ENCODE measurements at regions of chr7 and their contacts with region 1.

Region 1: GRCh38 chr7:102236592-102237287 is 49.9 kb upstream of the SH2B2 start:
- ATAC-seq: peak; percentile 92 to 98 (median 95)
- H3K4me3 ChIP-seq: no peak overlapping the region
- H3K27ac ChIP-seq: no peak overlapping the region
- H3K4me1 ChIP-seq: no peaks in the 10 kb centered on the region

Region 2: DNA sequence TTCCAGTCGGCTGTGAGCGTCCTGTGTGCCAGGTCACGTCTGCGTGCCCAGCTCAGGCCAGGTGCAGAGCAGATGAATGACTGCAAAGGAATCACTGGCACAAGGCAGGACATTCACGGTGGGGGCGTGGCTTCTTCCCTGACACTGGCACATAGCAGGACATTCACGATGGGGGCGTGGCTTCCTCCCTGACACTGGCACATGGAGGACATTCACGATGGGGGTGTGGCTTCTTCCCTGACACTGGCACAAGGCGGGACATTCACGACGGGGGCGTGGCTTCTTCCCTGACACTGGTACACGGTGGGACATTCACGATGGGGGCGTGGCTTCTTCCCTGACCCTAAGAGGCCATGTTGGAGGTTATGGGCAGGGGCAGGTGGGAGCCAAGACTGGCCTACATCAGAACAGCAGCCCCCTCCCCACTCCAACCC is 671.9 kb before region 1 on chr7:
- in situ Hi-C with region 1: loop called in 1 of 9 experiments (anchors 25 kb)
- ATAC-seq: peak in 6 of 8 experiments; percentile 50 to 82 (median 74)
- H3K4me3 ChIP-seq: no peak overlapping the region
- H3K27ac ChIP-seq: no peak overlapping the region
- H3K4me1 ChIP-seq: no peaks in the 10 kb centered on the region

Region 3: GRCh38 chr7:101688183-101688831 is 548.4 kb before region 1 on chr7:
- in situ Hi-C with region 1: loop called in 7 of 9 experiments (anchors 10 to 25 kb)
- ATAC-seq: peak; percentile 94 to 99 (median 96)
- H3K4me3 ChIP-seq: peak overlapping the region in 3 of 5 donors; percentile 9 to 20 (median 19)
- H3K27ac ChIP-seq: no peak overlapping the region
- H3K4me1 ChIP-seq: peaks cover 3 to 11% of the 10 kb centered on the region in 2 donors

Region 4: DNA sequence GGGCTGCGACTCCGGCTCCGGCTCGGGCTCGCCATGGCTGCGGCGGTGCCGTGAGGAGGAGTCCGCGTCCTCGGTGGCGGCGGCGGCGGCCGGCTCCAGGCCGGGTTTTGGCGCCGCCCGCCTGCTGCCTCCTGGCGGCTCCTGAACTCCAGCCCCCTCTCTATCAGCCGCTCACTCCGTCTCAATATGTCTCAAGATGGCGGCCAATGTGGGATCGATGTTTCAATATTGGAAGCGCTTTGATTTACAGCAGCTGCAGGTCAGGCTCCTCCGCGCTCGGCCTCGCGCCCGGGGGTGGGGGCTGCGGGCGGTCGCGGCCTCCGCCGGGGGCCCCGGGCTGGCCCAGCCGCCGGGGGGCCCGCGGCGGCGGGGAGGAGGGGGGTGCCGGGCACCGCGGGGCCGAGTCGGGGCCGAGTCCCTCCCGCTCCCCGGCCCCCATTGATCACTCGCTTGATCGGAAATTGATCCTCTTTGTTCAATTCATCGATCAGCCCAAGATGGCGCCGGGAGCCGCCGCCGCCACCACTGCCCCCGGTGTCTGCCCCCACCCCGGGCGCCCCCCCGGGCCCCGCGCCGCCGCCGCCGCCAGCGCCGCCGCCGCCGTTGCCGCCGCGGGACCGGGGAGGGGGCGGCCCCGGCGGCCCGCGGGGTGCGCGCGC is 420.8 kb before region 1 on chr7:
- in situ Hi-C with region 1: loop called in 1 of 9 experiments (anchors 25 kb)
- ATAC-seq: peak; percentile 77 to 87 (median 81)
- H3K4me3 ChIP-seq: peak overlapping the region; percentile 77 to 97 (median 93)
- H3K27ac ChIP-seq: peak overlapping the region; percentile 89 to 90
- H3K4me1 ChIP-seq: peaks cover 17 to 23% of the 10 kb centered on the region in 2 donors

Region 5: GRCh38 chr7:101985903-101986734 is 250.6 kb before region 1 on chr7:
- in situ Hi-C with region 1: no loop called
- ATAC-seq: peak in 5 of 8 experiments; percentile 21 to 70 (median 33)
- H3K4me3 ChIP-seq: no peak overlapping the region
- H3K27ac ChIP-seq: no peak overlapping the region
- H3K4me1 ChIP-seq: peaks cover 7 to 21% of the 10 kb centered on the region in 2 donors

Region 6: GRCh38 chr7:102093287-102094001 is 143.3 kb before region 1 on chr7:
- in situ Hi-C with region 1: no loop called
- ATAC-seq: peak in 2 of 8 experiments; percentile 57 to 67
- H3K4me3 ChIP-seq: no peak overlapping the region
- H3K27ac ChIP-seq: no peak overlapping the region
- H3K4me1 ChIP-seq: peaks cover 6 to 21% of the 10 kb centered on the region in 2 donors

Measured in motor neuron (in vitro differentiated cells).